Left lung (tissue), 14 donors: ENCODE measurements at regions of chr1 and their contacts with region 1.

Region 1: GRCh38 chr1:212608209-212608955 is at the start of gene ATF3:
- DNase-seq: peak; percentile 97 to 99 (median 99)
- ATAC-seq: peak; percentile 88
- H3K4me3 ChIP-seq: peak within 1 kb of the TSS; percentile 51 to 71
- H3K27ac ChIP-seq: peak within 1 kb of the TSS; percentile 93 to 98
- H3K4me1 ChIP-seq: peaks cover 6 to 49% of the 10 kb centered on the region in 2 donors
- H3K27me3 ChIP-seq: peaks cover 12 to 74% of the 10 kb centered on the region in 2 donors
- CTCF ChIP-seq: no peak
- polyA plus RNA-seq, gene ATF3: 5.6 to 81.8 (median 25.1) TPM

Region 2: DNA sequence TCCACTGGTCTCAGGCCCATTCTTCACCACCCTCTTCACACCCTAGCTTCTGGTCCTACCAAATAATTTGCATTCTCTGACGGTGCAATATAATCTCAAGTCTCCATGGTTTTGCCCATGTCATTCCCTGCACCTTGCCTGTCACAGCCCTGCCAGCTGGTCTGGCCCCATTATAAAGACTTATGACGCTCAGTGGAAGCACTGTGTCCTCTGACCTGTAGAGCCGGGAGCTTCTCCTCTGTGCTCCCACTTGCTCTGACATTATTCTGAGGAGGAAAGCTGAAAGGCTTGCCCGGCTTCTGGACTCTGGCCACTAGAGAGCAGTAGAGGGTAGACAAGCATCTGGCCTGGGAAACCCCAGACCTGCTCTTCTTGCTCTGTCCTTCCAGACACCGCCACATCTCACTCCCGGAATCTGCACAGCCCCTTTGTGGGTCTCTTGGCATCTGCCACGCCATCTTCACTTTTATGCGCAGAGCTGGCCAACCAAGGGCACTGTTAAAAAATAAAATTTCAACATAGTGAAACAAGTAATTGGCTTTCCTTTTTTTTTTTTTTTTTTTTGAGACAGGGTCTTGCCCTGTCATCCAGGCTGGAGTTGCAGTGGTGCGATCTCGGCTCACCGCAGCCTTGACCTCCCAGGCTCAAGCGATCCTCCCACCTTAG is 131.2 kb before region 1 on chr1:
- intact Hi-C with region 1: loop called in 1 of 2 experiments (anchors 5 kb)
- DNase-seq: peak in 3 of 4 donors; percentile 73 to 88 (median 82)
- ATAC-seq: peak; percentile 99
- H3K4me3 ChIP-seq: no peak overlapping the region
- H3K27ac ChIP-seq: no peak overlapping the region
- H3K4me1 ChIP-seq: peaks cover 0 to 10% of the 10 kb centered on the region in 2 donors
- H3K27me3 ChIP-seq: no peaks in the 10 kb centered on the region
- CTCF ChIP-seq: peak; percentile 83 to 89